Heart right ventricle (tissue), 16 donors: ENCODE measurements at regions of chr16 and their contacts with region 1.

Region 1: GRCh38 chr16:69123910-69124309 is 8.5 kb downstream of the CHTF8 start:
- DNase-seq: peak in 1 of 2 donors; percentile 56
- ATAC-seq: peak in 6 of 8 donors; percentile 29 to 52 (median 32)
- H3K4me3 ChIP-seq: no peak overlapping the region
- H3K27ac ChIP-seq: no peak overlapping the region
- H3K4me1 ChIP-seq: peaks cover 0 to 27% (median 14%) of the 10 kb centered on the region in 9 donors
- H3K27me3 ChIP-seq: no peaks in the 10 kb centered on the region
- CTCF ChIP-seq: peak; percentile 41 to 77 (median 69)

Region 2: DNA sequence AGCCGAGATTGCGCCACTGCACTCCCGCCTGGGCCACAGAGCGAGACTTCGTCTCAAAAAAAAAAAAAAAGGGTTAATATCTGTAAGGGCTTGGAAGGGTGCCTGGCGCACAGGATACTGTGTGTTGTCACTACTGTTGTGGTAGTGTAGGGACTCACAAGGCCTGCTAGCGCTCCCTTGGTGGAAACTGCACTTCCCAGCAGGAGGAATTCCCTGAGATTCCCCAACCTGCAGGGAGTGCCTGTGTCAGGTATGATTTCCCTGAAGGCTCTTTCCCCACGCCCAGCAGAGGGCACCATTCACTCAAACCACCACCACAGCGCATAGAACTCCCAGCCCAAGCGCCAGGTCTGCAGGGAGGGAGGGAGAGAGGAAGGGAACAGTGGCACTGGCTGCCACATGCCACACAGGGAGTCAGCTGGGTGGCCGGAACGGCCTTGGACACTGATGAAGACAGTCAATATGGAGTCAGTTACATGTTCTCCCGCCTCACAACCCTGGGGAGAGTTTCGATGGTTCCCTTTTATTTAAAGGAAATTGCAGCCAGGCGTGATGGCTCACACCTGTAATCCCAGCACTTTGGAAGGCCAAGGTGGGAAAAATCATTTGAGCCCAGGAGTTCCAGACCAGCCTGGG is 419.6 kb before region 1 on chr16:
- intact Hi-C with region 1: loop called in 1 of 10 experiments (anchors 10 kb)
- DNase-seq: peak; percentile 44
- ATAC-seq: peak in 7 of 8 donors; percentile 43 to 77 (median 57)
- H3K4me3 ChIP-seq: no peak overlapping the region
- H3K27ac ChIP-seq: no peak overlapping the region
- H3K4me1 ChIP-seq: peaks cover 0 to 14% (median 0%) of the 10 kb centered on the region in 9 donors
- H3K27me3 ChIP-seq: peaks cover 0 to 11% (median 0%) of the 10 kb centered on the region in 7 donors
- CTCF ChIP-seq: peak in 8 of 9 donors; percentile 21 to 67 (median 56)

Region 3: GRCh38 chr16:68848786-68849185 is 275.1 kb before region 1 on chr16:
- intact Hi-C with region 1: loop called in 8 of 10 experiments (anchors 2 to 10 kb)
- DNase-seq: no peak
- ATAC-seq: no peak
- H3K4me3 ChIP-seq: no peak overlapping the region
- H3K27ac ChIP-seq: no peak overlapping the region
- H3K4me1 ChIP-seq: peaks cover 0 to 20% (median 6%) of the 10 kb centered on the region in 9 donors
- H3K27me3 ChIP-seq: no peaks in the 10 kb centered on the region
- CTCF ChIP-seq: no peak

Region 4: DNA sequence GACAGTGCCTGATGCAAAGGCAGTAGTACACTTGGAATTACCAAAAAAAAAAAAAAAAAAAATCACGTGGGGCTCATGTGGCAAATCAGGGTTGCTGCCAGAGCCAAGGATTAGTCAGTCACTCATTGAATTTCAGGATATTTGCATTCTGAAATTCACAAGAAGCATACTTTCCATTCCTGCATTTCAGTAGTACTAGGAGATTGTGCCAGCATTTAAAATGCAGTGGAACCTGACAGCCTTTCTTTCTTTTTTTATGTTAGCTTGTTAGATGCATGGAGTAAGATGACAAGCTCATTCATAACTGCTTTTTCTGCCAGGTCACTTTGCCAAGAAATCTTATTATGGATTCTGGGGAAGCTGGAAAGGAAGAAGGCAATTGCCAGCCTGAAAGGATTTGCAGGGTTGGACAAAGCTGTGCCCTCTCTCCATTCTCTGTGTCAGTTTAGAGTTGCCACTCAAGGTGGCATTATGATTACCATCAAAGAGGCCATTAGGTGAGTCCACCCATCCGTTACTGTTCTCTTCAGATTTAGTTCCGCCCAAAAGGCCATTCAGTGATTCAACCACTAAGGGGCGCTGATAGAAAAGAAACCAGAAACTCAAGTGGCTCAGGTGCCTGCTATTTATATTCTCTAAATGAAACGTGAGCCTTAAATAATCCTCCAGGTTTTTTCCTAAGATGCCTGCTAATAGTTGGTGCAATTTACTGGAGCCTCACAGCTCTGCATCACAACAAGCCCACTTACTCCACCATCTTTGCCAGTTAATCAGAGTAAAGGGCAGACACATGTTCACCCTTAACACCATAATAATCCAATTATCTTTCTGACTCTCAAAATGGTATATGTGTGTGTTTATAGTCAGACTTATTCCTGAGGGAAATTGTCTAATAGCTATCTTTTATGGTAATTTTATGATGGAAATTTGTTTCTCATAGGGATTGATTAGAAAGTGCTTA is 221.6 kb before region 1 on chr16:
- intact Hi-C with region 1: loop called (anchors 1 to 10 kb)
- DNase-seq: peak in 1 of 2 donors; percentile 16
- ATAC-seq: peak in 4 of 8 donors; percentile 35 to 67 (median 51)
- H3K4me3 ChIP-seq: no peak overlapping the region
- H3K27ac ChIP-seq: no peak overlapping the region
- H3K4me1 ChIP-seq: peaks cover 0 to 19% (median 0%) of the 10 kb centered on the region in 9 donors
- H3K27me3 ChIP-seq: no peaks in the 10 kb centered on the region
- CTCF ChIP-seq: peak; percentile 30 to 74 (median 70)

Region 5: DNA sequence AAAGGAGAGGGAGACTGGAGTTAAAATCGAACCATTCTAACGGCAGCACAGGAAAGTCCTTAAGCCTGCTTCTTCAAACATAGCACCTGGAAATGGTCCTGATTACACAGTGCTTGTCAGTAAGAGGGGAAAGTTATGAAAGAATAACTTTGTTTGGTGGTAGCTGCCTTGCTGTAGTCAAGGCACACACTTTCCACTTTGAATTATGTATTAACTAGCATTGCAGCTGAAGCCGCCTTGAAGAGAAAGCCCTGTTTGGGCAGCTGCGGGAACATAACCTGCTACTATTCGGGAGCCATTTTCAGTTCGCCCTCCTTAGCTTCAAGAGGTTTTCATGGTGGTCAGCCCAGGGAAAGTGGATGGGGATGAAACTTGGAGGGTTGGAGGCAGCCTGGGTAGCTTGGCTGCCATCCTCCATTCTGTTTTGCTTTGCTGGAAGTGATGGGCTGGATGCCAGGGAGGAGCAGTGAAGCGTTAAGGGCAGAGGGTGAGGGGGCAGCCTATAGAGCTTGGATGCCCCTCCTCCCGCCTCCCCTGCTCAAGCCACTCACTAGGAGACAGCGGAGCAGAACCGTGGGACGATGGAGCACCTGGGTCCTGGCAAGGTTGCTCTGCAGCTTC is 23.7 kb before region 1 on chr16:
- intact Hi-C with region 1: no loop called
- DNase-seq: no peak
- ATAC-seq: no peak
- H3K4me3 ChIP-seq: no peak overlapping the region
- H3K27ac ChIP-seq: no peak overlapping the region
- H3K4me1 ChIP-seq: peaks cover 0 to 11% (median 3%) of the 10 kb centered on the region in 9 donors
- H3K27me3 ChIP-seq: peaks cover 0 to 11% (median 0%) of the 10 kb centered on the region in 7 donors
- CTCF ChIP-seq: no peak

Region 6: GRCh38 chr16:69166221-69166833 is 42.4 kb after region 1 on chr16:
- intact Hi-C with region 1: no loop called
- DNase-seq: no peak
- ATAC-seq: no peak
- H3K4me3 ChIP-seq: no peak overlapping the region
- H3K27ac ChIP-seq: no peak overlapping the region
- H3K4me1 ChIP-seq: peaks cover 0 to 15% (median 0%) of the 10 kb centered on the region in 9 donors
- H3K27me3 ChIP-seq: no peaks in the 10 kb centered on the region
- CTCF ChIP-seq: no peak

Region 7: GRCh38 chr16:70737377-70738082 is 1613.6 kb after region 1 on chr16:
- intact Hi-C with region 1: no loop called
- DNase-seq: peak; percentile 74 to 76
- ATAC-seq: peak; percentile 60 to 85 (median 72)
- H3K4me3 ChIP-seq: peak overlapping the region in 1 of 10 donors; percentile 8
- H3K27ac ChIP-seq: peak overlapping the region; percentile 81 to 92 (median 86)
- H3K4me1 ChIP-seq: peaks cover 32 to 75% (median 45%) of the 10 kb centered on the region in 9 donors
- H3K27me3 ChIP-seq: no peaks in the 10 kb centered on the region
- CTCF ChIP-seq: peak in 1 of 9 donors; percentile 17